HEK293 (cell line): ENCODE measurements at regions of chr1 and their contacts with region 1.

Region 1: DNA sequence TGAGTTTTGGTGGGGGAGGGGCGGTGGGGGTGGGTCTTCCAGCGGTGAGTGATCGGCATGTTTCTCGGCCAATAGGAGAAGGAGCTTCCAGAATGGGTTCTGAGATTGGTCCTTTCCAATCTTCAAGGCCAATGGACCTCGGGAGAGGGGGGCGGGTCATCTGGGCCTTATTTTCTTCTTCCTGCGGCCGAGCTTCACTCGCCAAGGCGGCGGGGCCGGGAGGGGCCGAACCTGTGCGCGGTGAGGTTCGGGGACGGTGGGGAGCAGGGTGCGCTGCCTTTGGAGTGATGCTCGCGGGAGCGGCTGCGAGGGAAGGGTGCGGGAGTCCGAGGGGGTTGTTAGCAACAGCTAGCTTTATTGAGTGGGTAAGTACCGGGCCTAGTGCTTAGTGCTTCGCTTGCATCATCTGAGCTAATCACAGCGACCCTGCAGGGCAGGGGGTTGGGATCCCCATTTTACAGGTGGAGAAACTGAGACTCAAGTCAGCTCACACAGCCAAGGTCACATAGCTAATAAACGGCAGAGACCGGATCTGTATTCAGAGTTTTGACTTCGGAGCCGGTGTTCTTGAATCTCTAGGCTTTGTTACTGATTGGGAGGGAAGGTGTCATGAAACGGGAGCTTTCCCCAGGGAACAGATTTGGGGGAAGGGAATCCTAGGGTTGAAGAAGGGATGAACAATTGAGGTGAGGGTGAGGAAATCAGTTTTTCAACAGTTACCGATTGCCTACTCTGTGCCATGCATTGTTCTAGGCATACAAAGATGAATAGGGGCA is 549 bp downstream of the KDM4A start:
- H3K4me3 ChIP-seq: peak overlapping the region; percentile 98
- H3K27ac ChIP-seq: peak overlapping the region; percentile 76
- H3K4me1 ChIP-seq: no peaks in the 10 kb centered on the region
- CTCF ChIP-seq: peak; percentile 37; the same call in 1 of the 2 replicates

Region 2: DNA sequence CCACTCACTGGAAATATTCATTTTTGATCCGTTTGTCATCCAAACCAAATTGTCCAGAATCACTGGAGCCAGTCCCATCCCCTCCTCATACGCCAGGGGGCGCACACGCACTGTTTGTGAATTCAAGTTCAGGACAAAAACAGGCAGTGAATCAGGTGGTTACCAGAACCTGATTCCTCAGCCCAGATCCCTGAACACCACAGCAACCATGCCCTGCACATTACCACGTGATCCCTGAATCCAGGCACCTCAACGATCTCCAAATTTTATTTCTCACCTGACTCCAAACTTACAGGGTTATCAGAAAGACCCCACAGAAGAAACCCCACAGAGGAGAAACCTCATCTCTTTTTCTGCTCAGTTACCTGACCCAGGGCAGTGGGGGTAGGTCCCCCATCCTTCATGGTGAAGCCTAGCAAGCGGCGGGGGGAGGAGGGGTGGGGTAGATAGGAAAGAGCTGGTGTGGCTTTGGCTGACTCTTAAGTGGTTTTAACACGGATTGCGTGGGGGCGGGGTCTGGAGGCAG is 121.2 kb before region 1 on chr1:
- CTCF ChIA-PET with region 1: interaction called, 9 read pairs
- POLR2A ChIA-PET with region 1: interaction called, 24 read pairs
- H3K4me3 ChIP-seq: no peak overlapping the region
- H3K27ac ChIP-seq: no peak overlapping the region
- H3K4me1 ChIP-seq: peaks cover 2% of the 10 kb centered on the region; the same call in 1 of the 2 replicates
- CTCF ChIP-seq: peak; percentile 83

Region 3: DNA sequence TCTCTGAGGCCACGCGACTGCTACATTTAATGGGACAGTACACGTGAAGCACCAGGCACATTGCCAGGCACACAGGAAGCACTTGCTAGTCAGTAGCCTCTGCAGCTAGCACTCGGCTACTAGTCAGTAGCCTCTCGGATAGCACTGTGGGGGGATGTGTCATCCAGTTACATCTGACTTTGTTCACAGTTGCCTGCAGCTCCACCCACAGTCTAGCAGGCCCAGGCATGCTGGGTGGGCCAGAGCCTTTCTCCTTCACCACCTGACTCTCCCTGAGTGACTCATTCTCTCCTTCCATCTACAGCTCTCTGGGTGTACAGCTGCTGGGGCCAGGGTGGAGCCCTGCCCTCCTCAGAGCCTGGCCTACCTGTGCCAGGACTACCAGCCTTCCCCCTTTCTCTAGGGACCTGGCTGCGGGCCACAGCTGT is 68.3 kb before region 1 on chr1:
- CTCF ChIA-PET with region 1: no interaction called
- POLR2A ChIA-PET with region 1: interaction called, 23 read pairs
- H3K4me3 ChIP-seq: no peak overlapping the region
- H3K27ac ChIP-seq: peak overlapping the region; percentile 33; the same call in 1 of the 2 replicates
- H3K4me1 ChIP-seq: no peaks in the 10 kb centered on the region
- CTCF ChIP-seq: no peak

Region 4: GRCh38 chr1:43639976-43640789 is 10.3 kb before region 1 on chr1:
- CTCF ChIA-PET with region 1: interaction called, 6 read pairs
- POLR2A ChIA-PET with region 1: interaction called, 27 read pairs
- H3K4me3 ChIP-seq: no peak overlapping the region
- H3K27ac ChIP-seq: no peak overlapping the region
- H3K4me1 ChIP-seq: no peaks in the 10 kb centered on the region; the same call in 1 of the 2 replicates
- CTCF ChIP-seq: no peak

Region 5: DNA sequence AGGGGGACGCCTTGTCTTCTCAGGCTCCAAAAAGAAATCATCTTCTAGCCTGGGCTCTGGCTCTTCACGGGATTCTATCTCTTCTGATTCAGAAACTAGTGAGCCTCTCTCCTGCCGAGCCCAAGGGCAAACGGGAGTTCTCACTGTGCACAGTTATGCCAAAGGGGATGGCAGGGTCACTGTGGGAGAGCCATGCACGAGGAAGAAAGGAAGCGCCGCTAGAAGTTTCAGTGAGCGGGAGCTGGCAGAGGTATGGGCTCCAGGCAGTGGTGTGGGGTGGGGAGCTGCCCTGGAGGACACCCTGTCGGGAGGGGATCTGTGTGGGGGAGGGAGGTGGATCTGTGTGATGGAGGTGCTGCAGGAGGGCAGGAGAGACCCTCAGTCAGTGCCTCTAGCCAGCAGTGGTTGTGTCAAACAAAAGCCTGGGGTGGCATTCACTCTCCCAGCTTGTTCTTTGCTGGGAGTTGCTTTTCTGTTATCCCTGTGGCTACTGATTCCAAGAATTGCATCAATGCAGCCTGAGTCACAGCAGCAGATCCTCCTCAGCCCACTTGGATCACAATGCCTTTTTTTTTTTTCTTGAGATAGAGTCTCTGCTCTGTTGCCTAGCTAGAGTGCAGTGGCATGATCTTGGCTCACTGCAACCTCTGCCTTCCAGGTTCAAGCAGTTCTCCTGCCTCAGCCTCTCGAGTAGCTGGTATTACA is 21.3 kb after region 1 on chr1:
- CTCF ChIA-PET with region 1: no interaction called
- POLR2A ChIA-PET with region 1: interaction called, 19 read pairs
- H3K4me3 ChIP-seq: no peak overlapping the region
- H3K27ac ChIP-seq: no peak overlapping the region
- H3K4me1 ChIP-seq: no peaks in the 10 kb centered on the region
- CTCF ChIP-seq: no peak